GM12878 (cell line): ENCODE measurements at regions of chr3 and their contacts with region 1.

Region 1: DNA sequence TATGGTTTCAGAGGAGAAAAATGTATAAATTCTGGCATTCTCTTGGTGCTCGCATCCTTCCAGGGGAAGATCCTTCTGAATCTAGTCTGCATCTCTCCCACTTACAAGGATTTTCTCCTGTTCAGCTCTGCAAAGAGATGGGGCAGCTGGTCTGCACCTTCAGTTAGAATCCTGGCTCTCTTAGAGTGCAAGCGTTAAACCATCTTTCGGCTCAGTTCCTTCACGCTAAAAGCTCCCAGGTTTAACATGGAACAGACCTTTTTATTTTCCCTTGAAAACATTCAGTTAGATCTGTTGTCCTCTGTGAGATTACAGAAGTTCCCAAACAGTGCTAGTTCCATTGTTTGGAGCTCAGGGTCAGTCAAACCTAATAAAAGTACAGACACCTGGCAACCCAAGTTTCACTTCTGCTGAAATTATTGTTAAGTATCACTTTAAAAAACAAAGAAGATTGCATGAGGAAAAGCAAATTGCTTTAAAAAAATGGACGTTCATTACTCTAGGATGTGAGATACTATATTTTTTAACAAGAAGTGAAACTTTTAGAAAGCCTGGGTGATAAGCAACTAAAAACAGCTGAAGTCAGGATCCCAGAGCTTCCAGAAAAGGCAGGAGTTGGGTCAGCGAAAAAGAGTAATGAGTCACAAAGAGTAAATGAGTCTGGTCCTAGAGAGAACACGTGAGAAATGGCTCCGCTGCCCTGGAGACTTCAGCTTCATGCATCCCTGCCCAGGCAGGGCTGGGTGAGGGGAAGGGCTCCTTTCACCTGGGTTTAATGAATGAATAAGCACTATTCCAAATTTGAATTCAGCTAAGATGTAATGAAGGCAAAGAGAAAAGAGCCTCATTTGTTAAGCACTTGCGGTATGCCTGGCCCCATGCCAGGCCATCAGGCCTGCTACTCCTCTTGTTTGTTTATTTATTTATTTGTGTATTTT is 63.3 kb downstream of the ABTB1 start:
- DNase-seq: peak; percentile 85
- ATAC-seq: peak; percentile 85
- H3K4me3 ChIP-seq: peak overlapping the region; percentile 77
- H3K27ac ChIP-seq: peak overlapping the region; percentile 97
- H3K4me1 ChIP-seq: peaks cover 31% of the 10 kb centered on the region
- H3K27me3 ChIP-seq: no peaks in the 10 kb centered on the region
- CTCF ChIP-seq: no peak
- EP300 ChIP-seq: peak in 1 of 2 experiments; percentile 71
- POLR2A ChIP-seq: no peak
- RAD21 ChIP-seq: no peak

Region 2: DNA sequence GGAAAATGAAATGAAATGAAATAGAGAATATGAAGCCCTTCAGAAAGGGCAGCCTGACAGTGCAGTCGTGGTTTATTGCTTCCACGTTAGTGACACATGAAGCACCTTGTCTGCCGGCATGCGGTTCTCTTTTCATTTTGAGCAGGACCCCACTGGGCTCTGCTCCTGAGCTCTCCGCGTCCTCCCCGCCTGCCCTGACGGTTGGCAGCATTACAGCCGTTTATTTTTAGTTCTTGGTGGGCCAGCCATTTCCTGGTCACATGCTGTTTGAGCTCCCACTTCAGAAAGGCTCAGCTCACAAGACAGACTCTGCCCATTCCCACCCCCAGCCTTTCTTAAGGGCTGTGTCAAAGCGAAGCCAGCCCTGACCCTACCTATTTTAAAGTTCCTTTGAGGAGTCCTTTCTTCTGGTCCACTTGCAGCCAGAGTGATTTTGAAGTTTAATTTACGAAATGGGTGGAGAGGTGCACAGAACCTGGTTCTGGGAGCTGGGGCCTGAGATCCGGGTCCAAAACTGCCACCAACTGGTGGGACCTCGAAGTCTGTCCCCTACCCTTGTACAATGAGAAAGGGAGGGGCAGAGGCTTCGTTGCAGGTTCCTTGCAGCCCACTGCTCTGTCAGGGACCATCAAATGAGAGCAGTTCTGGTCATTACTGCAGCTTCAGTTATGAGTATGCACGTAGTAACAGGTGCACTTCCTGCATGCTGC is 26.2 kb after region 1 on chr3:
- CTCF ChIA-PET with region 1: interaction called, 7 read pairs
- POLR2A ChIA-PET with region 1: interaction called, 10 read pairs
- RAD21 ChIA-PET with region 1: interaction called, 19 read pairs
- SMC1A ChIA-PET with region 1: interaction called, 24 read pairs
- in situ Hi-C with region 1: no loop called
- intact Hi-C with region 1: no loop called
- DNase-seq: peak; percentile 56
- ATAC-seq: peak; percentile 75
- H3K4me3 ChIP-seq: peak overlapping the region; percentile 62
- H3K27ac ChIP-seq: peak overlapping the region; percentile 96
- H3K4me1 ChIP-seq: peaks cover 64% of the 10 kb centered on the region
- H3K27me3 ChIP-seq: no peaks in the 10 kb centered on the region
- CTCF ChIP-seq: no peak
- EP300 ChIP-seq: peak; percentile 20 to 26; a peak in 1 of 4 replicates
- POLR2A ChIP-seq: peak; percentile 69
- RAD21 ChIP-seq: peak; percentile 13; the same call in 1 of the 2 replicates

Region 3: DNA sequence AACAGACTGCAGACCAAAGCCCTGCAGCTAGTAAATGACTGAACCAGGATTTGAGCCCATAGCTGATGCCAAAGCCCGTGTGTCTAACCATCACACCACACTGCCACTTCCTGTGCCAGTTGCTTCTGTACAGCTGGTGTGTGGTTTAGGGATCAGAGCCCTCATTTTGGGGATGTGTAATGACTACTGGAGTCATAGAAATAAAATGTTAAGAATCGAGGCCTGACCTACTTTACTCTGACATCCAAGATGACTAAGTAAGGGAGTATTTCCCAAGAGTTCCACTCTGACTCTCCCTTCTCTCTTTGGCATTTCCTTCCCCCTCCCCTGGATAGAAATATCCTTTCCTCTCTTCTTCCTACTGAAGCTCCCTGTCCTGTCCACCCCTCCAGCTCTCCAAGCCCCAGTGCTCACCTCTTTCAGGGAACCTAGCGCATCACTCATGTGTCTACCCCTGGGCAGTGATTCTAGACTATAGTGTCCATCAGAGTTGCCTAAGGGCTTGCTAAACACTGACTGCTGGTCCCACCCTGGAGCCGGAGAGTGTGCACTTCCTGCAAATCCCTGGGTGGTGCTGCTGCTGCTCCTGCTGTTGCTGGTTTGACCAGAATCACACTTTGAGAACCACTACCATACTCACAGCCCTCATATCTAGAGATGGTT is 32.4 kb after region 1 on chr3:
- CTCF ChIA-PET with region 1: interaction called, 4 read pairs
- POLR2A ChIA-PET with region 1: interaction called, 8 read pairs
- RAD21 ChIA-PET with region 1: interaction called, 19 read pairs
- SMC1A ChIA-PET with region 1: interaction called, 22 read pairs
- in situ Hi-C with region 1: no loop called
- intact Hi-C with region 1: no loop called
- DNase-seq: no peak
- ATAC-seq: no peak
- H3K4me3 ChIP-seq: no peak overlapping the region
- H3K27ac ChIP-seq: peak overlapping the region; percentile 61
- H3K4me1 ChIP-seq: peaks cover 62% of the 10 kb centered on the region
- H3K27me3 ChIP-seq: no peaks in the 10 kb centered on the region
- CTCF ChIP-seq: no peak
- EP300 ChIP-seq: no peak
- POLR2A ChIP-seq: no peak
- RAD21 ChIP-seq: no peak